Aorta (tissue), 5 donors: ENCODE measurements at regions of chr5 and their contacts with region 1.

Region 1: DNA sequence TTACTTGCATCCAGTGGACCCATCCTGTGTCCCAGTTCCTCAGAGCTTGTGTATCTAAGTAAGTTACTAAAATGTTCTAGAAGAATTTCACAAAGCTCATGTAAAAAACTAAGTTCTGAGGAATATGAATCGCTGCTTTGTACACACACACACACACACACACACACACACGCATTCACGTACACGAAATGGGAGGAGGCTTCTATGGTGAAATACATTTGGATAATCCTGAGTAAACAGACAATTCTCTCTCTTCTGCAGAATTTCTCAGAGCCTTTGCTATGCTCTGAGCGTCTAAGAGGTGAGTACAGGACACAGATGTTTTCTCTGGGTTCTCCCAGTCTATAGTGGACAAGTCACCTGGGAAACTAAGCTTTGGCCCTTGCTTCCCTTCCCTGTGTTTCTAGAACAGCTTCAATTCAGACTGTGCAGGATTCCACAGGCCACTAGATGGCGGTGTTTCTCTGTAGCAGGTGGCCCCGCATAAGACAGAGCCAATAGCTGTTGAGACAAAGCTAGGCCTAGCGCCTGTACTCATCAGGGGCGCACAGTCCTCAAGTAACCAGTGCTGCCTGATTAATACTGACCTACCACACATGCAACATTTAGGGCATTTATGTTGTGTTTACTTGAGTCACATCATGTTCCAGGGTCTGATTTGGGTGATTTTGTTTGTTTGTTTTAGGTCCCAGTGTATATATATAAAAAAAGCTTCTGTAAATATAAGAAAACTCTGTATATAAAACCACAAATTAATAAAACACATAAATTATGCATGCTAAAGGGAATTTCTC is 114.8 kb downstream of the LIFR start:
- DNase-seq: peak; percentile 91 to 92
- ATAC-seq: peak; percentile 92
- H3K4me3 ChIP-seq: no peak overlapping the region
- H3K27ac ChIP-seq: no peak overlapping the region
- H3K4me1 ChIP-seq: no peaks in the 10 kb centered on the region
- H3K27me3 ChIP-seq: no peaks in the 10 kb centered on the region

Region 2: GRCh38 chr5:38240212-38240611 is 201.4 kb before region 1 on chr5:
- intact Hi-C with region 1: no loop called
- DNase-seq: no peak
- ATAC-seq: no peak
- H3K4me3 ChIP-seq: no peak overlapping the region
- H3K27ac ChIP-seq: no peak overlapping the region
- H3K4me1 ChIP-seq: no peaks in the 10 kb centered on the region
- H3K27me3 ChIP-seq: no peaks in the 10 kb centered on the region

Region 3: GRCh38 chr5:38382898-38383297 is 58.8 kb before region 1 on chr5:
- intact Hi-C with region 1: loop called in 1 of 2 experiments (anchors 5 kb)
- DNase-seq: peak; percentile 64 to 79
- ATAC-seq: peak; percentile 83
- H3K4me3 ChIP-seq: no peak overlapping the region
- H3K27ac ChIP-seq: no peak overlapping the region
- H3K4me1 ChIP-seq: peaks cover 0 to 2% of the 10 kb centered on the region in 2 donors
- H3K27me3 ChIP-seq: peaks cover 0 to 5% of the 10 kb centered on the region in 2 donors

Region 4: DNA sequence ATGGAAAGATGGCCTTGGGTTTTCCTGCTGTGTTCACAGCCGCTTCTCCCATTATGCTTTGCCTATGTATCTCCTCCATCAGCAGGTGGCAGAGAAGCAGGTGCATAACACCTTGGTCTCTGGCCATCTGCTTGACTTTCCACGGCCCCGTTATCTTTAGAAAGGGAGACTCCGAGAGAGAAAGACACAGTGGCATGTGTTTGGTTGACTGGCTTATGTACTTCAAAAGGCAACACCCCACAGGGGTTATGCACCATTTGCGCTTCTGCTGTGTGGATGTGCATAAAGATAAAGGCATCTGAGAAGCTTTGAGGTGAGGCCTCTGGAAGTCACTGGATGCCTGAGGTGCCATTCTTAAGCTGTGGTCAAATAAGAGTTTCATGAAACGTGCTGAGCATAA is 44.9 kb before region 1 on chr5:
- intact Hi-C with region 1: no loop called
- DNase-seq: no peak
- ATAC-seq: no peak
- H3K4me3 ChIP-seq: no peak overlapping the region
- H3K27ac ChIP-seq: no peak overlapping the region
- H3K4me1 ChIP-seq: no peaks in the 10 kb centered on the region
- H3K27me3 ChIP-seq: no peaks in the 10 kb centered on the region

Region 5: GRCh38 chr5:38556599-38557305 is 115.1 kb after region 1 on chr5 and contains the start of gene LIFR:
- intact Hi-C with region 1: loop called in 1 of 2 experiments (anchors 5 kb)
- DNase-seq: peak; percentile 84 to 93
- ATAC-seq: peak; percentile 91
- H3K4me3 ChIP-seq: peak within 1 kb of the TSS; percentile 51 to 98
- H3K27ac ChIP-seq: peak within 1 kb of the TSS; percentile 59 to 85
- H3K4me1 ChIP-seq: peaks cover 0 to 2% of the 10 kb centered on the region in 2 donors
- H3K27me3 ChIP-seq: no peaks in the 10 kb centered on the region
- total RNA-seq, gene LIFR: 67.6 to 69.6 TPM

Region 6: DNA sequence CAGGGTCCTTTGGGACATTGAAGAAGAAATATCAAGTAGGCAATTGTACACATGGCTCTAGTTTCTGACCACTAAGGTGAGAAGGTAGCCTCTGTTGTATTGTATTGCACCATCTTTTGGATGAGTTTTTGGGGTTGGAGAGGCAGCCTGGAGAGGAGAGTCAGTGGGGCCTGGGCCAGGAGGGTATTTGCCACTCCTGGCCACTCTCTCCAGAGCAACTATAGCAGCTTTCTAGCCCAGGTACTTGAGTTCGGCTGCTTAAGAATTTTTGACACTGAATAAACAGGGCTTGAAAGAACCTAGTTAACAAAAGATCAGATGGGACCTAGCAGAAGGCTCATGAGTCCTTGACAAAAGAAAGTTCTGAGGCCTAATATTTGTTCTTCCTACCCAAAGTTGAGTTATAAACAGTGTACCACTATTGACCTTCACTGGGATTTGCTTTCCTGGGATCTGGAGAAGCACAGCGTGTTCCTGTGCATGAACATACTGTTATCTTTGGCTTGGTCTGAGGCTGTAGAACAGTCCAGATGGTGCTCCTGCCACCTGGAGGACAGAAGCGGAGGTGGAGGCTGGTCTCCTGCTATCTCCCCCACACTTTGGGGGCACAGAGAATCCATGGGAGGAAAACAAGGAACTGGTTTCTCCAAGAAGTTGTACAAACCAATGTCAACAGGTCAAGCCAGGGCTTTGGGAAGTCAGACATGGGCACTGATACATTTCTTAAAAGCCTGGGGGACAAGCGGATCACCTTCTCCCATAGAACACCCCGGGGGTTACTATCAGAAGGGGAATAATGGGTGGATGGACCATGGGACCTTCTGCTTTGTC is 225.2 kb after region 1 on chr5:
- intact Hi-C with region 1: loop called (anchors 1 to 2 kb)
- DNase-seq: no peak
- ATAC-seq: peak; percentile 87
- H3K4me3 ChIP-seq: no peak overlapping the region
- H3K27ac ChIP-seq: peak overlapping the region; percentile 15 to 86
- H3K4me1 ChIP-seq: peaks cover 0 to 6% of the 10 kb centered on the region in 2 donors
- H3K27me3 ChIP-seq: no peaks in the 10 kb centered on the region

Region 7: DNA sequence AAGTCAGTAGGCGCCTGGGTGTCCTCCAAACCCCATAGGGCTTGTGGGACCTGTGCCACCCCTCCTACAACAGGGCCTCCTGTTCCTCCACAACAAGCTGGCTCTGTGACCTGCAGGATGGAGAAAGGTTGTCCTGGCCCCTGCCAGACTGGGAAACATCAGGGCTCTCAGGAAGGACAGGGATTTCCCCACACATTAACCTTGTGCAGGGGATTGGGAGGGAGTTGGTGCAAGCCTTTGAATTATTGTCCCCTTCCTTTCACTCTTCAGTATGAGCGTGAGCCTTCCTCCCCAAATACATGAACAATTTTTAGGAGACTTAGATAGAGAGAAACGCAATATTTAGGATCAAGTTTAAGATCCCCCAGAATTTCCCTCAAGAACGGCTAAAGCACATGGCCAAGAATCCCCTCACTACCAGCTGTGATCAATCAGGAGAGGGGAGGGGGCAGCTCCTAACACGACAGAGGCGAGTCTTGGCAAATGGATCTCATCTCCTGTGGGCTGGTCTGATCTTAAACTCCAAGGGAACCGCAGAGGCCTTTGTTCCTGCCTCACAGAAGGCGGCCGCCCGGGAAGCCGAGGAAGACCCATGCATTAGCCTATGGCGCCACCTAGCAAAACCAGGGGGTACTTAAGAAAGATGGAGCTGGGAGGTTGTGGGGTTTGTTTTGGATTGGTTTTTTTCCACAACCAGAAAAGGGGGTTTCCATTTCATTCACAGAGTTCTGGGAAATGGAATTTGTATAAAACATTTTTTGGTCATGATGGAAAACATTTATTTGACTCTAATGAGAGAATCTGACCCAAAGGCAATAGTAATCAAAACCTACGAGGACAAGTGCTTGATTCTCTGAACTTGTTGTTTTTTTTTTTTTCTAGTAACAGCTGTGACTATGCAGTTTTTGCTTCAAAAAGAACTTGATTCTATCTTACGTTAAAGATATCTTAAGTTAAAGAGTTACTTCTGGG is 368.0 kb after region 1 on chr5:
- intact Hi-C with region 1: loop called (anchors 2 to 5 kb)
- DNase-seq: peak; percentile 85 to 88
- ATAC-seq: peak; percentile 87
- H3K4me3 ChIP-seq: no peak overlapping the region
- H3K27ac ChIP-seq: no peak overlapping the region
- H3K4me1 ChIP-seq: no peaks in the 10 kb centered on the region
- H3K27me3 ChIP-seq: no peaks in the 10 kb centered on the region